Adrenal gland (tissue), 19 donors: ENCODE measurements at regions of chr16 and their contacts with region 1.

Region 1: GRCh38 chr16:7025616-7026190 is 306.9 kb upstream of the RBFOX1 start:
- DNase-seq: peak; percentile 55 to 92 (median 79)
- H3K4me3 ChIP-seq: no peak overlapping the region
- H3K27ac ChIP-seq: no peak overlapping the region
- H3K4me1 ChIP-seq: no peaks in the 10 kb centered on the region
- H3K27me3 ChIP-seq: no peaks in the 10 kb centered on the region
- CTCF ChIP-seq: peak; percentile 43 to 69 (median 58)
- POLR2A ChIP-seq: no peak

Region 2: DNA sequence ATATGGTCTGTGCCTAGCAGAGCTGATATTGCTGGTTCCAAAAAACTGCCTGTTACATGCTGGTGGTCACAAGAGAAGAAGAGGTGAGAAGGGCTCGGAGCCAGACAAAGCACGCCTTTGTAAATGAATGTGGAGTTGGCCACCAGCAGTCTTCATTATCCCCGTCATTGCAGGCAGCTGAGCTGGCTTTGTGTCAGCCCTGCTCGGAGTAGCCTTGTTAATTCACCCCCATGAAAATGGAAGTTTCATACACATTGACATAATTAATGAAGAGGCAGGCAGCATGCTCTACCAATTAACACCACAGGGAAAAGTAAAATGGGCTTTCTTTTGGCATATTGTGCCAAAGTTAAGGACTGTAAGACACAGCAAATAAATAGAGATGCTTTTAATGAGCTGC is 193.2 kb after region 1 on chr16:
- intact Hi-C with region 1: no loop called
- DNase-seq: no peak
- H3K4me3 ChIP-seq: no peak overlapping the region
- H3K27ac ChIP-seq: no peak overlapping the region
- H3K4me1 ChIP-seq: no peaks in the 10 kb centered on the region
- H3K27me3 ChIP-seq: no peaks in the 10 kb centered on the region
- CTCF ChIP-seq: no peak
- POLR2A ChIP-seq: no peak

Region 3: DNA sequence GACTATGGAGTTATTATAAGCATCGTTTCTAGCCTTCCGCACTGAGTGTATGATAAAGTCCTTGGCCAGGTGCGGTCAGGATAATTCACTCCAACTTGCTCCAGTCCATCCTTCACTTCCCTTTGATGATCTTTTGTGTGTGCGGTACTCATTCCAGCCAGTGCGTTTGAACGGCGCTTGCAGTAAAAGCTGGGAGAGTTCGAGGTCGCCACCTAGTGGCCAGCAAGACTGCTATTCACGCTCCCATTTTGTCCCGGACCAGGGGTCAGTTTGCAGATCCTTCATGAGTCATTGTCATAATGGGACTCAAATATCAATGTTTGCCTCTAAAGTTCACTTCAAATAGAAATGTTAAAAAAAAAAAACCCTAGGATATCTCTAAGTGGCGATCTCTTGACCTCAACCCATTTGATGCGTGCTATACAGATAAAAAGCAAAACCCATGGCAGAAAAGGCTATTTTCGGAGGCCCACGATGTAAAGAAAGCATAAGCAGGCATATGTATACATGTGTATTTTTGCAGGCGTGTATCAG is 1147.5 kb after region 1 on chr16:
- intact Hi-C with region 1: loop called in 1 of 2 experiments (anchors 5 kb)
- DNase-seq: peak; percentile 57 to 84 (median 73)
- H3K4me3 ChIP-seq: no peak overlapping the region
- H3K27ac ChIP-seq: no peak overlapping the region
- H3K4me1 ChIP-seq: no peaks in the 10 kb centered on the region
- H3K27me3 ChIP-seq: no peaks in the 10 kb centered on the region
- CTCF ChIP-seq: peak; percentile 71 to 83 (median 78)
- POLR2A ChIP-seq: no peak